A549 (cell line): ENCODE measurements at regions of chr15 and their contacts with region 1.

Region 1: GRCh38 chr15:85592148-85592547 is 202.6 kb downstream of the KLHL25 start:
- DNase-seq: peak in 1 of 2 experiments; percentile 79
- ATAC-seq: peak; percentile 38 to 63; a peak in 5 of 6 replicates
- H3K4me3 ChIP-seq: no peak overlapping the region
- H3K27ac ChIP-seq: peak overlapping the region; percentile 34 to 81; a peak in 4 of 6 replicates
- H3K4me1 ChIP-seq: peaks cover 79% of the 10 kb centered on the region
- CTCF ChIP-seq: peak; percentile 54
- EP300 ChIP-seq: no peak
- POLR2A ChIP-seq: no peak
- RAD21 ChIP-seq: peak; percentile 68 to 74

Region 2: GRCh38 chr15:85443593-85444087 is 148.5 kb before region 1 on chr15:
- CTCF ChIA-PET with region 1: no interaction called
- POLR2A ChIA-PET with region 1: no interaction called
- DNase-seq: peak; percentile 49 to 82
- ATAC-seq: peak; percentile 77 to 92
- H3K4me3 ChIP-seq: no peak overlapping the region
- H3K27ac ChIP-seq: no peak overlapping the region
- H3K4me1 ChIP-seq: peaks cover 39% of the 10 kb centered on the region
- CTCF ChIP-seq: no peak
- EP300 ChIP-seq: no peak
- POLR2A ChIP-seq: no peak
- RAD21 ChIP-seq: peak in 1 of 2 experiments; percentile 24; a peak in 1 of 5 replicates

Region 3: DNA sequence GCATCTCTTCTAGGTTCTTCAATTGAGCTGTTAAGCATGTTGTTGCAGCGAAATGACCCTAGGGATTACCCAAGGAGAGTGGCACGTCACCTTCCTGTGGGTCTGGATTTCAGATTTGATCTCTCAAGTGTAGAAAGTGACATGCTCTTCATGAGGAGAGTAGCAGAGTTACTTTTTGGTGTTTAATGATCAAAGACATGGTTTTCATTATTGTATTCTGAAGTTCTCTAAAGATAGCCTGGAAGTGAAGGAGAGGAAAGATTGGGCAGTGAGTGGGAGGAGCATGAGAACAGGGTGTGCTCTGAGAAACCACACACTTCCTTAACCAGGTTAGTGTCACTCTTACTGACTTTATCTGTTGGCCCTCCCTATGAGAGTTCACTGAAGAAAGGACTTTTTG is 58.1 kb before region 1 on chr15:
- CTCF ChIA-PET with region 1: no interaction called
- POLR2A ChIA-PET with region 1: no interaction called
- DNase-seq: no peak
- ATAC-seq: no peak
- H3K4me3 ChIP-seq: no peak overlapping the region
- H3K27ac ChIP-seq: no peak overlapping the region
- H3K4me1 ChIP-seq: no peaks in the 10 kb centered on the region; the same call in 2 of the 3 replicates
- CTCF ChIP-seq: no peak
- EP300 ChIP-seq: no peak
- POLR2A ChIP-seq: no peak
- RAD21 ChIP-seq: no peak

Region 4: DNA sequence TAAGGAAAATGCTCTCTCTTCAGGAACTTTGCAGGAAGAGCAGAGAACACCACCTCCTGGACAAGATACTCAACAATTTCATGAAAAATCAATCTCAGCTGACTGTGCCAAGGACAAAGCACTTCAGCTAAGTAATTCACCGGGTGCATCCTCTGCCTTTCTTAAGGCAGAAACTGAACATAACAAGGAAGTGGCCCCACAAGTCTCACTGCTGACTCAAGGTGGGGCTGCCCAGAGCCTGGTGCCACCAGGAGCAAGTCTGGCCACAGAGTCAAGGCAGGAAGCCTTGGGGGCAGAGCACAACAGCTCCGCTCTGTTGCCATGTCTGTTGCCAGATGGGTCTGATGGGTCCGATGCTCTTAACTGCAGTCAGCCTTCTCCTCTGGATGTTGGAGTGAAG is 11.3 kb before region 1 on chr15:
- CTCF ChIA-PET with region 1: interaction called, 14 read pairs
- POLR2A ChIA-PET with region 1: no interaction called
- DNase-seq: peak in 1 of 2 experiments; percentile 64
- ATAC-seq: peak; percentile 38 to 42
- H3K4me3 ChIP-seq: peak overlapping the region; percentile 48
- H3K27ac ChIP-seq: peak overlapping the region; percentile 87 to 89
- H3K4me1 ChIP-seq: peaks cover 77% of the 10 kb centered on the region
- CTCF ChIP-seq: no peak
- EP300 ChIP-seq: no peak
- POLR2A ChIP-seq: no peak
- RAD21 ChIP-seq: peak; percentile 31 to 35; a peak in 4 of 5 replicates

Region 5: GRCh38 chr15:85607842-85608241 is 15.7 kb after region 1 on chr15:
- CTCF ChIA-PET with region 1: interaction called, 31 read pairs
- POLR2A ChIA-PET with region 1: interaction called, 3 read pairs
- DNase-seq: peak in 1 of 2 experiments; percentile 51
- ATAC-seq: peak; percentile 88 to 89
- H3K4me3 ChIP-seq: no peak overlapping the region; the same call in 2 of the 3 replicates
- H3K27ac ChIP-seq: peak overlapping the region; percentile 66 to 76
- H3K4me1 ChIP-seq: peaks cover 48% of the 10 kb centered on the region
- CTCF ChIP-seq: no peak
- EP300 ChIP-seq: no peak
- POLR2A ChIP-seq: no peak
- RAD21 ChIP-seq: no peak